ENCODE measurements at regions of chr6 and their contacts with region 1.

Region 1: DNA sequence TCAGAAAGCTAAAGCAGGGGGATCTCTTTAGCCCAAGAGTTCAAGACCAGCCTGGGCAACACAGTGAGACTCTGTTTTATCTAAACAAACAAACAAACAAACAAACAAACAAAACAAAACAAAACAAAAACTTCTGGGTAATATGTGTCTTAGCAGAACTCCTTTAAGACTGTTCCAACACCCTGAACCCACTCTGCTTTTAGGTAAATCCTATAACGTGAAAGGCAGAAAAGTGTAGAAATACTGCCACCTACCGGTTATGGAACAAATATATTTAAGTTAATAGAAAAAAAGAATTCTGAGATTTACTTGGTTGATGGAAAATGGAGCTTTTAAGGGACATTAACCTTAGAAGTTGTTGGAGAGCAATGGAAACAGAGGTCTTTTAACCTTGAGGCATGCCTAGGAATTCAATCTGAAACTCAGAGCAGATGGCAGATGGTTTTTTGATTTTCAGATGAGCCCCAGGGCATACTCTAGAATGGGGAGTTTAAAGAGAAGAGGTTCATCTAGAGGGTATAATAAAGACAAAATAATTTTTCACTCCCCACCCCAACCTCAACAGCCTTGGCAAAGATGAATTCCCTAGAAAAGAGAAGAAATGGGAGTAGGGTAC is 38.5 kb downstream of the SOD2 start:
- DNase-seq: no peak
- ATAC-seq: no peak
- H3K4me3 Mint-ChIP-seq: no peak overlapping the region
- H3K27ac Mint-ChIP-seq: no peak overlapping the region
- H3K4me1 Mint-ChIP-seq: no peaks in the 10 kb centered on the region
- H3K27me3 Mint-ChIP-seq: no peaks in the 10 kb centered on the region
- CTCF ChIP-seq: peak; percentile 74

Region 2: GRCh38 chr6:159169193-159169555 is 485.4 kb before region 1 on chr6 and contains the start of gene FNDC1:
- CTCF ChIA-PET with region 1: interaction called, 90 read pairs
- POLR2A ChIA-PET with region 1: no interaction called
- intact Hi-C with region 1: loop called (anchors 1 kb)
- DNase-seq: peak; percentile 74
- ATAC-seq: peak; percentile 84
- H3K4me3 Mint-ChIP-seq: peak within 1 kb of the TSS; percentile 76
- H3K27ac Mint-ChIP-seq: no peak within 1 kb of the TSS
- H3K4me1 Mint-ChIP-seq: peaks cover 20% of the 10 kb centered on the region
- H3K27me3 Mint-ChIP-seq: peaks cover 63% of the 10 kb centered on the region
- CTCF ChIP-seq: no peak
- total RNA-seq, gene FNDC1: not detected in 2 replicates

Region 3: GRCh38 chr6:159252955-159253508 is 401.6 kb before region 1 on chr6:
- CTCF ChIA-PET with region 1: interaction called, 19 read pairs
- POLR2A ChIA-PET with region 1: no interaction called
- intact Hi-C with region 1: no loop called
- DNase-seq: no peak
- ATAC-seq: peak; percentile 31
- H3K4me3 Mint-ChIP-seq: no peak overlapping the region
- H3K27ac Mint-ChIP-seq: no peak overlapping the region
- H3K4me1 Mint-ChIP-seq: no peaks in the 10 kb centered on the region
- H3K27me3 Mint-ChIP-seq: peaks cover 9% of the 10 kb centered on the region
- CTCF ChIP-seq: no peak